Heart left ventricle (tissue), 16 donors: ENCODE measurements at regions of chr20 and their contacts with region 1.

Region 1: DNA sequence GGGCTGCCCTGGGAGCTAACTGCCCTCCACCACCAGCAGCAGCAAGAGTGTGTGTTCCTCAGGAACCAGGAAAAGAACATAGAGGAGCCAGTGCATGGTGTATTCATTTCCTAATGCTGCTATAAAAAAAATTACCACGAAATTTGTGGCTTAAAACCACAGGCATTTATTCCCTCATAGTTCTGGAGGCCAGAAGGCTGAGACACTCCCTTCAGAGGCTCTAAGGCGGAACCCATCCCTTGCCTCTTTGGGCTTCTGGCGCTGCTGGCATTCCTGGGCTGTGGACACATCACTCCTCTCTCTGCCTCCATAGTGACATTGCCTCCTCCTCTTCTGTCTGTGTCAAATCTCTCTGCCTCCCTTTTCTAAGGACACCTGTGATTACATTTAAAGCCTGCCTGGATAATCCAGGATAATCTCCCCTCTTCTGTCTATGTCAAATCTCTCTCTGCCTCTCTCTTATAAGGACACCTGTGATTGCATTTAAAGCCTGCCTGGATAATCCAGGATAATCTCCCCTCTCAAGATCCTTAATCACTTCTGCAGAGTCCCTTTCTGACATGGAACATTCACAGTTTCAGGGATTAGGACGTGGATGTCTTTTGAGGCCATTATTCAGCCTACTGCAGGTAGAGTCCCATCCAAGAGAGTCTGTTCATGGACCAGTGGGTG is 54.7 kb downstream of the NDUFAF5 start:
- DNase-seq: no peak
- ATAC-seq: no peak
- H3K4me3 ChIP-seq: no peak overlapping the region
- H3K27ac ChIP-seq: peak overlapping the region in 1 of 12 donors; percentile 69
- H3K4me1 ChIP-seq: peaks cover 0 to 5% (median 0%) of the 10 kb centered on the region in 12 donors
- H3K27me3 ChIP-seq: no peaks in the 10 kb centered on the region
- CTCF ChIP-seq: no peak
- POLR2A ChIP-seq: no peak

Region 2: GRCh38 chr20:13883425-13883824 is 43.9 kb after region 1 on chr20:
- intact Hi-C with region 1: loop called in 1 of 10 experiments (anchors 10 kb)
- DNase-seq: no peak
- ATAC-seq: no peak
- H3K4me3 ChIP-seq: no peak overlapping the region
- H3K27ac ChIP-seq: no peak overlapping the region
- H3K4me1 ChIP-seq: no peaks in the 10 kb centered on the region
- H3K27me3 ChIP-seq: no peaks in the 10 kb centered on the region
- CTCF ChIP-seq: no peak
- POLR2A ChIP-seq: no peak

Region 3: DNA sequence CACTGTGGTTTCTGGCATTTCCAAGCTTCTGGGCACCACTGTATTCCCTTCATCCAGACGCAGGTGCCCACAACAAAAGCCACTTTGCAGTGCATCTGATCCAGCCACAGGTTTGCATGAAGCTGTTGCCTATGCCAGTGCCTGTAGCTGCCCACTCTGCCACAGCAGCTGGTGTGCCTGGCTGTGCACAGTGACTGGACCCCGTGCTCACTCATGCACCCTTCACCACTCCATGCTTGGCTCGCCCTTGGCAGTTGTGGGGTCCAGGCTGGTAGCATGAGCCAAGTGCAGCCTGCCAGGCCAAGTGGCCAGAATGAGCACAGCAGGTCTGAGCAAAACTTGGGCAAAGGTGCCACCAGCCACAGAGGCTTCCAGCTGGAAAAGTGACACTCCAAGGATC is 108.2 kb after region 1 on chr20:
- intact Hi-C with region 1: loop called in 1 of 10 experiments (anchors 10 kb)
- DNase-seq: no peak
- ATAC-seq: no peak
- H3K4me3 ChIP-seq: no peak overlapping the region
- H3K27ac ChIP-seq: no peak overlapping the region
- H3K4me1 ChIP-seq: no peaks in the 10 kb centered on the region
- H3K27me3 ChIP-seq: no peaks in the 10 kb centered on the region
- CTCF ChIP-seq: no peak
- POLR2A ChIP-seq: no peak